Tibial artery (tissue), 4 donors: ENCODE measurements at regions of chr4 and their contacts with region 1.

Region 1: GRCh38 chr4:176377780-176378179 is 58.0 kb downstream of the SPCS3 start:
- DNase-seq: no peak
- H3K4me3 ChIP-seq: no peak overlapping the region
- H3K27ac ChIP-seq: no peak overlapping the region
- H3K4me1 ChIP-seq: no peaks in the 10 kb centered on the region
- H3K27me3 ChIP-seq: no peaks in the 10 kb centered on the region
- CTCF ChIP-seq: no peak

Region 2: DNA sequence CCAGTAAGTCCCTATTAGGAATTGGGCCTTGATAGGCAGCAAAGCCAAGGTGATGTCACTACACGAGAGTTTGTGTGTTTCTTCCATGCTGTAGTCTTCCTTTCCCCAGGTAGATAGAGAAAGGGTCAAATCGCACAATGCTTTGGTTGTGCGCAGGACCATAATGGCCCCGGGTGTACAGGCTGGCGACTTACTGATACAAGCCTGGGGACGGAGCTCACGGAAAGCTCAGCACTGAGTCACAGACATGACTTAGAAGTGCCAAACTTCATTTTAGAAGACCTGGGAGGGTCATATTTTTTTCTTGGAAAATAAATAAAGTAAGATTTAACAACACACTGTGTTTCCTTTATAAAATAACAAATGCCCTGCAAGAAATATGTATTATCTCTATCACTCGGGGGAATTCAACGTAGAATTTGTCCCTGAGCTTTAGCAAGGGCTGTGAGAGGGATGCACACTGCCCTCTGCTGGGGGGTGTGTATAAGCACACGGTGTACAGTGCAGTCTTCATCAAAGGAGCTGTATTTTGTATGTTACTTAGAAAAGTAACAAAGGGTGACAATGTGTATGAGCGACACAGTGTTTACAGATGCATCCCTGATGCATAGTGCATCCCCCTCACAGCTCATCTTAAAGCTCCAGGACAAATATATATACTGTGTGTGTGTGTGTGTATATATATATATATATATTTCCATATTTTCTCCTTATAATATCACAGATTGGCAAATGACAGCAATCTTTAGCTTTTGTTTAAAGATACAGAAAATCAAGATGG is 669.5 kb after region 1 on chr4:
- intact Hi-C with region 1: loop called (anchors 10 kb)
- DNase-seq: no peak
- H3K4me3 ChIP-seq: no peak overlapping the region
- H3K27ac ChIP-seq: no peak overlapping the region
- H3K4me1 ChIP-seq: peaks cover 0 to 3% (median under 1%) of the 10 kb centered on the region in 4 donors
- H3K27me3 ChIP-seq: no peaks in the 10 kb centered on the region
- CTCF ChIP-seq: peak; percentile 50 to 70